ENCODE measurements at regions of chr6 and their contacts with region 1.

Region 1: GRCh38 chr6:73285674-73286283 is 22.8 kb upstream of the KHDC1 start:
- H3K4me3 Mint-ChIP-seq: no peak overlapping the region
- H3K27ac Mint-ChIP-seq: no peak overlapping the region
- H3K4me1 Mint-ChIP-seq: peaks cover 13% of the 10 kb centered on the region
- H3K27me3 Mint-ChIP-seq: no peaks in the 10 kb centered on the region

Region 2: DNA sequence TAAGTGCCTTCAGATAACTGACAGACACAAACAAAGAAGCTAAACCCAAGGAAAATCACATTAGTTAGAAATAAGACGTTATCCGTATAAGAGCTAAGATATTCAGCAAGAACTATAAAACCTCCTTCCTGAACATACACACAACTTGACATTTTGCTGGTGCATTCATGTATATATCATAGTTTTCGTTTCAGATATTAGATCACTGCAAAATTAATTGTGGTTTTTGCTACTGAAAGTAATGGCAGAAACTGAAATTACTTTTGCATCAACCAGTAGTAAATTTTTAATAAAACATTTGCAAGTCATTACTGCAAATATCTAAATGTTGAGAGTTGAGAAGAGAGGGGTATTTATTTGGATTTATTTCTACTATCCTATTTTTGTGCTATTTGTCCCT is 690.0 kb before region 1 on chr6:
- intact Hi-C with region 1: loop called (anchors 5 kb)
- H3K4me3 Mint-ChIP-seq: no peak overlapping the region
- H3K27ac Mint-ChIP-seq: no peak overlapping the region
- H3K4me1 Mint-ChIP-seq: peaks cover 8% of the 10 kb centered on the region
- H3K27me3 Mint-ChIP-seq: peaks cover 1% of the 10 kb centered on the region

Region 3: GRCh38 chr6:73041051-73041450 is 244.7 kb before region 1 on chr6:
- intact Hi-C with region 1: no loop called
- H3K4me3 Mint-ChIP-seq: no peak overlapping the region
- H3K27ac Mint-ChIP-seq: no peak overlapping the region
- H3K4me1 Mint-ChIP-seq: no peaks in the 10 kb centered on the region
- H3K27me3 Mint-ChIP-seq: no peaks in the 10 kb centered on the region

Region 4: DNA sequence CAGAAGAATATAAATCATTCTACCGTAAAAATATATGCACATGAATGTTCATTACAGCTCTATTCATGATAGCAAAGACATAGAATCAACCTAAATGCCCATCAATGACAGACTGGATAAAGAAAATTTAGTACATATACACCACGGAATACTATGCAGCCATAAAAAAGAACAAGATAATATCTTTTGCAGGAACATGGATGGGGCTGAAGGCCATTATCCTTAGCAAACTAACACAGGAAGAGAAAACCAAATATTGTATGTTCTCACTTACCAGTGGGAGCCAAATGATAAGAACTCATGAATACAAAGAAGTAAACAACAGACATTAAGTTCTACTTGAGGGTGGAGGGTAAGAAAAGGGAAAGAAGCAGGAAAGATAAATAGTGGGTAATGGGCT is 68.9 kb before region 1 on chr6:
- intact Hi-C with region 1: no loop called
- H3K4me3 Mint-ChIP-seq: no peak overlapping the region
- H3K27ac Mint-ChIP-seq: no peak overlapping the region
- H3K4me1 Mint-ChIP-seq: no peaks in the 10 kb centered on the region
- H3K27me3 Mint-ChIP-seq: no peaks in the 10 kb centered on the region

Region 5: DNA sequence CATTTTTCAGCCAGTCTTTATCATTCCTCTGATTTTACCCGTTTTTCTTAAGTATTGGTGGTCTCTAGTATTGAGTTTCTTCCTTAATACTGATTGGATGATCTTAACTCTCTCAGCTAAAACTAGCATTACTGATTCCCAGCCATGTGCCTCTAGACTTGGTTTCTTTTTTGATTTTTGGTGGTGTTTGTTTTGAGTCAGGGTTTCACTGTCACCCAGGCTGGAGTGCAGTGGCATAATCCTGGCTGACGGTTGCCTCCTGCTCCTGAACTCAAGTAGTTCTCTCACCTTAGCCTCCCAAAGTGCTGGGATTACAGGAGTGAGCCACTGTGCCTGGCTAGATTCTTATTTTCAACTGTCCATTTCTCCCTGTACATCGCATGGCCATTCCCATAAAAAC is 43.4 kb after region 1 on chr6:
- intact Hi-C with region 1: loop called (anchors 1 kb)
- H3K4me3 Mint-ChIP-seq: no peak overlapping the region
- H3K27ac Mint-ChIP-seq: no peak overlapping the region
- H3K4me1 Mint-ChIP-seq: no peaks in the 10 kb centered on the region
- H3K27me3 Mint-ChIP-seq: peaks cover 12% of the 10 kb centered on the region

Region 6: GRCh38 chr6:73388800-73389512 is 103.2 kb after region 1 on chr6:
- intact Hi-C with region 1: loop called (anchors 5 kb)
- H3K4me3 Mint-ChIP-seq: peak overlapping the region; percentile 79
- H3K27ac Mint-ChIP-seq: peak overlapping the region; percentile 84
- H3K4me1 Mint-ChIP-seq: peaks cover 14% of the 10 kb centered on the region
- H3K27me3 Mint-ChIP-seq: no peaks in the 10 kb centered on the region

Measured in dendritic cell treated with granulocyte-macrophage colony-stimulating factor and Interleukin-4, amounts not matched to agents 40 ng/mL and 50 ng/mL, for 4 days (primary cell).